Keratinocyte (primary cell): ENCODE measurements at regions of chrX and their contacts with region 1.

Region 1: DNA sequence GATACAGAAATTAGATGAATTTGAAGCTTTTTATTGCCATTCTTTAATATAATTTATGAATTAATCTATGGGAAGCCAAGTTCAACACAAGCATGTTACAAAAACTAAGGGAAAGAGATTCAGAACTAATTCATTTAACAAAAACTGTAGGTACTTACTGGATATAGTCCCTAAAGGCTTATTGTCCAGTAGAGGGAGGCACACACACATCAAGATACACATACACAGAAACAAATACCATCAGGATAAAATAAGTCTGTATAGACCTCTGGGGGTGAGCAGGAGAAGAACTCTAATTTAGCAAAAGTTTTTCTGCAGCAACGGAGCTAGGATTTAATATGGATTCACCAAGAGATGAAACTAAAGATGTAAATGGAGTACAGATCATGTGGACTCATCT is 83.0 kb upstream of the IL13RA1 start:
- DNase-seq: no peak
- H3K4me3 ChIP-seq: no peak overlapping the region
- H3K27ac ChIP-seq: no peak overlapping the region
- H3K4me1 ChIP-seq: no peaks in the 10 kb centered on the region
- H3K27me3 ChIP-seq: no peaks in the 10 kb centered on the region
- CTCF ChIP-seq: peak in 2 of 3 experiments; percentile 22 to 34

Region 2: DNA sequence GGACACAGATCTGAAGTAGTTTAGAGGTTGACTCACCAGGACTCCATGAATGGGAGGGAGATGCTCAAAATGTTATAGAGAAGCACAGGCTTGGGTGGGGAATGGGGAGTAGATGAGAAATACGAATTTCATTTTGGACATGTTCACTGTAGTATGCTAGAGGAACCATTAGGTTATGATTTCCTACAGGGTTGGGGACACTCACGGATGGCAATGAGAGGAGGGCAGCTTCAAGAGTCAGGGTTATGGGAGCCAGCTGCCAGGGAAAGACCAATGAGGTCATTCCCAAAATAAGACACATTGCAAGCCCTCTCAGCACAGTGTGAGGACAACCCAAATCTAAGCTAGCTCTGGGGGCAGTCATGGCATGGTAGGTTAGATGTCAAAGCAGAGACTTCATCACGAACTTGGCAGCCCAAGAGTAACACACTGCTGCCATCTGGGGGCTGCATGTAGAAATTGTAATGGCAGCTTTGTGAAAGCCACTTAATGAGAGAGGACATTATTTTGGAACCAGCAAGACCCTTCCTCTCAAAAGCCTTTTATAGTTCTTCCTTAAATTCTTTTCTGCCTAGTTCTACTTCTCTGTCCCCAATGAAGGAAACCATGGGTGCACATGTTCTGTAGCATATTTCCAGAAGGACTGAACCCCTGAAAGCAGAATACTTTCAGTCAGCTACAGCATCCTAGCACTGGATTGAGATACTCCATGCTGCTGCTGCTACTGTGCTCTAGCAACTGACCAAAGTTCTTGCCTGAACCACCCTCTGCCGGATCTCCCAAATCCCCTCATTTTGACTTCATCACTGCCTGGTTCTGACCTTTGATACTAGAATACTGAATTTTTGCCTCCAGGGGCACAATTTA is 163.0 kb after region 1 on chrX:
- dilution Hi-C with region 1: loop called (anchors 25 kb)
- DNase-seq: no peak
- H3K4me3 ChIP-seq: no peak overlapping the region
- H3K27ac ChIP-seq: no peak overlapping the region
- H3K4me1 ChIP-seq: no peaks in the 10 kb centered on the region
- H3K27me3 ChIP-seq: no peaks in the 10 kb centered on the region
- CTCF ChIP-seq: peak; percentile 59 to 77 (median 75)